Posterior vena cava (tissue), 2 donors: ENCODE measurements at regions of chr11 and their contacts with region 1.

Region 1: GRCh38 chr11:1889224-1890120 is 2.2 kb downstream of the PRR33 start:
- DNase-seq: peak; percentile 86

Region 2: DNA sequence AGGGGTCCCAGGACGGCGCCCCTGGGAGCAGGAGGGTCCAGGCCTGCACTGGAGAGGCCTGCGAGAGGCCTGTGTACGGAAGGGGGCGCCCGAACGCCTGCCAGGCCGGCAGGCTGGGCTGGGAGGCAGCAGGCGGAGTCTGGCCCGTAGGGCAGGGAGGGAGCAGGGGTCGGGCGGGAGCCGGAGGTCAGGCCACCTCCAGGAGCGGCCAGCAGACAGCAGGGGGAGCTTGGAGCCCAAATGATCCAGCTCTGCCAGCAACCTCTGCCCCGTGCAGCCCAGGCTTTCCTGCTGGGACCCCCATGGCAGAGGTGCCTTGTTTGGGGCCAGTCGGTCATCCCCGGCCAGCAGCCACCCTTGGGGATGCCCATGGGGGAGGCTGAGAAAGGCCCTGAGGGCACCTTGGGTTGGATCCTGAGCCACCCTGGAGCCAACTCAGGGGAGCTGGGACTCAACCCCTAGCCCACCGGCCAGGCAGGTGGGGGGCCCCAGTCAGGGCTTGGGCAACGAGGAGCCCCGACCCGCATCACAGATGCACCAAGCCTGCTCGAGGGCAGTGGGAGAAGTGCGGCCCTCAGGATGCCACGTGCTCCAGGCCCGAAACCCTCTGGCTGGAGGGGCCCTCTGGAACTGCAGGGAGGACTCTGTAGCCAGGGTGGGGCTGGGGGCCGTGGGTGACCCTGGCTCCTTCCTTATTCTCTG is 64.3 kb before region 1 on chr11:
- intact Hi-C with region 1: no loop called
- DNase-seq: peak; percentile 86

Region 3: GRCh38 chr11:1837171-1838076 is 52.0 kb before region 1 on chr11:
- intact Hi-C with region 1: no loop called
- DNase-seq: no peak

Region 4: DNA sequence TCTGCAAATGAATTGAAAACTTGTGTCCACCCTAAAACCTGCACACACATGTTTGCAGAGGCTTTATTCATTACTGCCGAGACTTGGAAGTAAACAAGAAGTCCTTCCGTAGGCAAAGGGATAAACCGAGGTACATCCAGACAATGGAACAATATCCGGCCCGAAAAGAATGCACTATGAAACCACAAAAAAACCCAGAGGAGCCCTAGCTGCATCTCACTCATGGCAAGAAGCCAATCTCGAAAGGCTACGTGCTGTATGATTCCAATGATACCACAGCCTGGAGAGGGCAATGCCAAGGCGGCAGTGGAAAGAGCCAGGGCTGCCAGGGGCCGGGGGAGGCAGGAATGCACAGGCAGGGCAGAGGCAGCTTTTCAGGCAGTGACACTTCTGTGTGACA is 54.5 kb after region 1 on chr11:
- intact Hi-C with region 1: loop called in 1 of 2 experiments (anchors 10 kb)
- DNase-seq: peak; percentile 60